PC-3 (cell line): ENCODE measurements at regions of chr7 and their contacts with region 1.

Region 1: GRCh38 chr7:80508440-80508839 is 3.4 kb downstream of the GNAT3 start:
- DNase-seq: no peak
- ATAC-seq: no peak
- H3K4me3 ChIP-seq: no peak overlapping the region
- H3K27ac ChIP-seq: no peak overlapping the region
- H3K4me1 ChIP-seq: peaks cover 10% of the 10 kb centered on the region
- H3K27me3 ChIP-seq: no peaks in the 10 kb centered on the region
- CTCF ChIP-seq: no peak

Region 2: GRCh38 chr7:80467069-80467468 is 41.4 kb before region 1 on chr7:
- CTCF ChIA-PET with region 1: no interaction called
- POLR2A ChIA-PET with region 1: no interaction called
- intact Hi-C with region 1: loop called (anchors 5 kb)
- DNase-seq: peak; percentile 88
- ATAC-seq: peak; percentile 94
- H3K4me3 ChIP-seq: 0 out of 2 replicates have a peak overlapping the region, but pooled peaks have one; percentile 6
- H3K27ac ChIP-seq: peak overlapping the region; percentile 75
- H3K4me1 ChIP-seq: peaks cover 36% of the 10 kb centered on the region
- H3K27me3 ChIP-seq: no peaks in the 10 kb centered on the region
- CTCF ChIP-seq: no peak

Region 3: GRCh38 chr7:80478683-80479082 is 29.8 kb before region 1 on chr7:
- CTCF ChIA-PET with region 1: no interaction called
- POLR2A ChIA-PET with region 1: no interaction called
- intact Hi-C with region 1: loop called (anchors 2 kb)
- DNase-seq: peak; percentile 74
- ATAC-seq: no peak
- H3K4me3 ChIP-seq: no peak overlapping the region
- H3K27ac ChIP-seq: 0 out of 2 replicates have a peak overlapping the region, but pooled peaks have one; percentile 9
- H3K4me1 ChIP-seq: peaks cover 44% of the 10 kb centered on the region
- H3K27me3 ChIP-seq: no peaks in the 10 kb centered on the region
- CTCF ChIP-seq: no peak

Region 4: GRCh38 chr7:80552304-80552703 is 43.9 kb after region 1 on chr7:
- CTCF ChIA-PET with region 1: no interaction called
- POLR2A ChIA-PET with region 1: no interaction called
- intact Hi-C with region 1: loop called (anchors 2 kb)
- DNase-seq: peak; percentile 76
- ATAC-seq: peak; percentile 51
- H3K4me3 ChIP-seq: no peak overlapping the region
- H3K27ac ChIP-seq: peak overlapping the region; percentile 74
- H3K4me1 ChIP-seq: peaks cover 38% of the 10 kb centered on the region
- H3K27me3 ChIP-seq: no peaks in the 10 kb centered on the region
- CTCF ChIP-seq: no peak

Region 5: DNA sequence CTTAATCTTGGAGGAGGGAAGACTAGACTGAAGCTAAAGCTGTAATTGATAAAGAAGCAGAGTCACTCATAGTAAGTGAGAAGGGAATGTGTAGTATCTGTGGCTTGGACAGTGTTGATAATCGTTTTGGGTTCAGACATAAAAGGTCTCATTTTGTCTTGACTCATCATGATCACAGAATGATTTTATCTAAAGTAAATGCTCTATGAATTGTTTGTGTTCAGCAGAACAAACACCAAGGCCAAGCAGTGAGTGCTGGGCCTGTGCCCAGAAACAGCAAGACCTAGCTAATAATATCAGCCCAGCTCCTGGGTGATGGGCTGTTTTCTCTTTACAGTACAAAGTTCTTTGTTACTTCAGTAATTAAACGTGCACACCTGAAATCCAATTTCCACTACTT is 103.3 kb after region 1 on chr7:
- CTCF ChIA-PET with region 1: no interaction called
- POLR2A ChIA-PET with region 1: no interaction called
- intact Hi-C with region 1: loop called (anchors 5 kb)
- DNase-seq: peak; percentile 87
- ATAC-seq: peak; percentile 94
- H3K4me3 ChIP-seq: no peak overlapping the region
- H3K27ac ChIP-seq: peak overlapping the region; percentile 71
- H3K4me1 ChIP-seq: peaks cover 41% of the 10 kb centered on the region
- H3K27me3 ChIP-seq: no peaks in the 10 kb centered on the region
- CTCF ChIP-seq: no peak

Region 6: DNA sequence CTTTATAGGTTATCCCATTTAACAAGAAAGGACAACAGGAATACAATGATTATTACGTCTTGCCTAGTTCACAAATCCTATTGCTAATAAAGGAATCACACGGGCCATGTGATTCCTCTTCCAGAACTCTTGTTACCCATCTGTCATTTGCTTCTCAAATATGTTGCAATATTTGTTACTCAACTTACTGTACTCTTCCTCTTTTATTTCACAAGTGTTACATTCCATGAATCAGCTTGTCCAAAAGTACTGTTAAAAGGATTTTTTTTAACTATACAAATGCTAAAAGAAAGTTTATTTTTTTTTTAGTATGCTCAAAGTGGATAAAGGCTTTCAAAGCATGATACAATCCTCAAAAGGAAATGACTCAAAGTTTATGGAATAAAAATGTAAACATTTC is 126.1 kb after region 1 on chr7:
- CTCF ChIA-PET with region 1: no interaction called
- POLR2A ChIA-PET with region 1: no interaction called
- intact Hi-C with region 1: loop called (anchors 1 kb)
- DNase-seq: peak; percentile 78
- ATAC-seq: peak; percentile 95
- H3K4me3 ChIP-seq: no peak overlapping the region
- H3K27ac ChIP-seq: peak overlapping the region; percentile 46
- H3K4me1 ChIP-seq: peaks cover 16% of the 10 kb centered on the region
- H3K27me3 ChIP-seq: no peaks in the 10 kb centered on the region
- CTCF ChIP-seq: no peak